ENCODE measurements at regions of chr10 and their contacts with region 1.

Region 1: GRCh38 chr10:76236356-76236755 is 804.9 kb downstream of the LRMDA start:
- DNase-seq: no peak
- ATAC-seq: no peak
- H3K4me3 ChIP-seq: no peak overlapping the region
- H3K27ac ChIP-seq: no peak overlapping the region
- H3K4me1 ChIP-seq: peaks cover 0 to 4% (median 0%) of the 10 kb centered on the region in 9 donors
- H3K27me3 ChIP-seq: no peaks in the 10 kb centered on the region
- CTCF ChIP-seq: no peak

Region 2: DNA sequence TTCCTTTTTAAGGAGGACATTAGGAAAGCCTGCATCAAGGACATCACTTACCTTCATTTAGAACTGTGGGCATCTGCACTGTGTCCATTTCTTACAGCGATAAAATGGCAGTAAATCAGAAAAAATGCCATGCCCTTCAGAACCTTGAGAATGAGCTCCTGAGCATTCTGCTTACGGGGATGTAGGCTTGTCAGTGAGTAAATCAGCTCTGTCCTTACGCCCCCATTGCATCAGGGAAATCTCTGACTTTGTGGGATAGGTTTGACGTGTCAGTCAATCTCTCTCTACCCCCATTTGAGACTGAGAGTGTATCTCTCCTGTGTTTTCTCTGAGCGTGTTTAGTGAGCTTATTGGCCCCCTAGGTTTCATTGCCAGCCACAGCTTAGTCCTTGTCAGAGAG is 32.2 kb after region 1 on chr10:
- intact Hi-C with region 1: loop called in 1 of 10 experiments (anchors 1 kb)
- DNase-seq: no peak
- ATAC-seq: no peak
- H3K4me3 ChIP-seq: no peak overlapping the region
- H3K27ac ChIP-seq: no peak overlapping the region
- H3K4me1 ChIP-seq: no peaks in the 10 kb centered on the region
- H3K27me3 ChIP-seq: no peaks in the 10 kb centered on the region
- CTCF ChIP-seq: no peak

Region 3: DNA sequence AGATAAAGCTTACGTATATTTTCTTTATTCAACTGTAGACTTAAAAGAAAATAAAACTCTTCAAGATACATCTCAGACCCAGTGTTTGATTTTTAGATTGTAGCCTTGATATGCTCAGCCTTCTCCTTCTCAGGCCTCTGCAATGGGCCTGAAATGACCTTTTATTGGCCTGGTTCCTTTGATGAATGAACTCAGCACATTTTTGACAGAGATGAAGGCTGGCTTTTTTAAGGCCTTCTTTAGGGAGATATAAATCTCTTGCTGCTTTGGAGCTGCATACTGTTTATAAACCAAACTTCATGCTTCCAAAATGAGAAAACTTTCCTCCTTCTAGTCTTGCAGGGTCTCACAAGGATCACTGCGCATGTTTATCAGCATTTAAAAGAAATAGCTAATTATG is 244.8 kb after region 1 on chr10:
- intact Hi-C with region 1: no loop called
- DNase-seq: no peak
- ATAC-seq: no peak
- H3K4me3 ChIP-seq: no peak overlapping the region
- H3K27ac ChIP-seq: no peak overlapping the region
- H3K4me1 ChIP-seq: no peaks in the 10 kb centered on the region
- H3K27me3 ChIP-seq: no peaks in the 10 kb centered on the region
- CTCF ChIP-seq: no peak

Measured in heart right ventricle (tissue), 16 donors.